WTC11 (cell line): ENCODE measurements at regions of chr17 and their contacts with region 1.

Region 1: GRCh38 chr17:12545877-12546513 is 119.7 kb upstream of the MYOCD start:
- DNase-seq: peak; percentile 49
- ATAC-seq: peak; percentile 96
- H3K4me3 Mint-ChIP-seq: no peak overlapping the region
- H3K27ac Mint-ChIP-seq: no peak overlapping the region
- H3K4me1 Mint-ChIP-seq: no peaks in the 10 kb centered on the region; the same call in 1 of the 2 replicates
- H3K27me3 Mint-ChIP-seq: no peaks in the 10 kb centered on the region; the same call in 1 of the 2 replicates
- CTCF ChIP-seq: peak; percentile 69

Region 2: DNA sequence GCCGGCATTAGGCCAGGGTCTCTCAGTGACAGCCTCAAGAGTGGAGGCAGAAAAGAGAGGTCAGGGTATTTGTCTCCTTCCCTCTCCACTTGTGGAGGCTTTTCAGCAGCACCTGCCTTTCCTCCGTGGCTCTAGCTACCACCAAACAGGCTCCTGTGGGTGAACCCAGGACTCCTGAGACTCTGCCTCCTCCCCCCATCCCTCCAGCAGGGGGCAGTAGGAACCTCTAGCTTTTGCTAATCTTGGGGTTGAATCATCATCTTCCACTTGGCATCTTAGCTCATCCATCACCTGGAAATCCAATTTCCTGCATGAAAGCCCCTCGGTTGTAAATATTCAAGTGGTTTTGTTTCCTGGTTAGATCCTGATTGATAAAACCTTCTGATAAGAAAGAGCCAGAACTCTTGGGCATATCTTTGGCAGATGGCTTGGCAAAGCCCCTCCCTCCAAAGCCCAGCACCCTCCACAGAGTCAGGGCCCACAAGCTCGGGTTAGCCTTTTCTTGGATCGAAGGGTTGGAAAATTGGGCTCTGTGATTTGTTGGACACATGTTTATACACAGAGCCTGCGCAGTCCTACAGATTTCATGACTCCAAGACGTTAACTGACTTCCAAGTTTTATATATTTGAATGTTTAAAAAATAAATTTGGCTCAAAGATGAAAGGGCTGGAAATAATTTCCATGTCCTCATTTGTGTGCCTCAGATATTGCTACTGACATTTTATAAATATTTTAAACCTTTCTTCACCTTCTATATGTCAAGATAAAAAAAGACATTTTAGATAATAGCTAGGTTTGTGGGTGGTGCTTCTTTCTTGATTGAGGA is 203.2 kb before region 1 on chr17:
- CTCF ChIA-PET with region 1: interaction called, 28 read pairs
- POLR2A ChIA-PET with region 1: no interaction called
- DNase-seq: peak; percentile 89
- ATAC-seq: peak; percentile 90
- H3K4me3 Mint-ChIP-seq: no peak overlapping the region
- H3K27ac Mint-ChIP-seq: no peak overlapping the region
- H3K4me1 Mint-ChIP-seq: peaks cover 15% of the 10 kb centered on the region
- H3K27me3 Mint-ChIP-seq: no peaks in the 10 kb centered on the region
- CTCF ChIP-seq: peak; percentile 86

Region 3: DNA sequence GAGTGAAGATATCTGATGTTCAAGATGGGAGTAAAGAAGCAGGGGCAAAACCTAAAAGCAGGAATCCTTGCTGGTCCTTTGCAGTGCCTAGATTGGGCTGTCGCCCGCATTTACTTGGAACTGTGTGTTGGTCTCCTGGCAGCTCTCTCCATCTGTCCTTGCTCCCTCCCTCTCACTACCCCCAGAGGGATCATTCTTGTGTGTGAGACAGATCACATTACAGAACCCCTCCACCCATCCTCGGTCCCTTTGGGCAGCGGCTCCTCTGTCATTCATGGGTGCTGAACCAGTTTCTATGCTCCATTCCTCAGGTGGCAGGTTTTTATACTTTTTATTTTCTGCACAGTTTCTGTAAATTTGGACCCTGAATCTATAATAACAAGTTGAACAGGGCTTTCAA is 20.3 kb after region 1 on chr17:
- CTCF ChIA-PET with region 1: interaction called, 11 read pairs
- POLR2A ChIA-PET with region 1: no interaction called
- DNase-seq: peak; percentile 23
- ATAC-seq: peak; percentile 92
- H3K4me3 Mint-ChIP-seq: no peak overlapping the region
- H3K27ac Mint-ChIP-seq: no peak overlapping the region
- H3K4me1 Mint-ChIP-seq: peaks cover 22% of the 10 kb centered on the region
- H3K27me3 Mint-ChIP-seq: no peaks in the 10 kb centered on the region
- CTCF ChIP-seq: no peak

Region 4: GRCh38 chr17:12620200-12620720 is 74.3 kb after region 1 on chr17:
- CTCF ChIA-PET with region 1: interaction called, 22 read pairs
- POLR2A ChIA-PET with region 1: no interaction called
- DNase-seq: no peak
- ATAC-seq: peak; percentile 52; the same call in 1 of the 2 replicates
- H3K4me3 Mint-ChIP-seq: no peak overlapping the region
- H3K27ac Mint-ChIP-seq: no peak overlapping the region
- H3K4me1 Mint-ChIP-seq: peaks cover 45% of the 10 kb centered on the region
- H3K27me3 Mint-ChIP-seq: no peaks in the 10 kb centered on the region
- CTCF ChIP-seq: no peak

Region 5: GRCh38 chr17:12667299-12667958 is 121.4 kb after region 1 on chr17:
- CTCF ChIA-PET with region 1: interaction called, 75 read pairs
- POLR2A ChIA-PET with region 1: interaction called, 3 read pairs
- DNase-seq: peak; percentile 42
- ATAC-seq: peak; percentile 43
- H3K4me3 Mint-ChIP-seq: peak overlapping the region; percentile 20; the same call in 1 of the 2 replicates
- H3K27ac Mint-ChIP-seq: no peak overlapping the region
- H3K4me1 Mint-ChIP-seq: peaks cover 10% of the 10 kb centered on the region; the same call in 1 of the 2 replicates
- H3K27me3 Mint-ChIP-seq: peaks cover 39% of the 10 kb centered on the region
- CTCF ChIP-seq: peak; percentile 23; the same call in 1 of the 2 replicates